PC-3 (cell line): ENCODE measurements at regions of chr11 and their contacts with region 1.

Region 1: DNA sequence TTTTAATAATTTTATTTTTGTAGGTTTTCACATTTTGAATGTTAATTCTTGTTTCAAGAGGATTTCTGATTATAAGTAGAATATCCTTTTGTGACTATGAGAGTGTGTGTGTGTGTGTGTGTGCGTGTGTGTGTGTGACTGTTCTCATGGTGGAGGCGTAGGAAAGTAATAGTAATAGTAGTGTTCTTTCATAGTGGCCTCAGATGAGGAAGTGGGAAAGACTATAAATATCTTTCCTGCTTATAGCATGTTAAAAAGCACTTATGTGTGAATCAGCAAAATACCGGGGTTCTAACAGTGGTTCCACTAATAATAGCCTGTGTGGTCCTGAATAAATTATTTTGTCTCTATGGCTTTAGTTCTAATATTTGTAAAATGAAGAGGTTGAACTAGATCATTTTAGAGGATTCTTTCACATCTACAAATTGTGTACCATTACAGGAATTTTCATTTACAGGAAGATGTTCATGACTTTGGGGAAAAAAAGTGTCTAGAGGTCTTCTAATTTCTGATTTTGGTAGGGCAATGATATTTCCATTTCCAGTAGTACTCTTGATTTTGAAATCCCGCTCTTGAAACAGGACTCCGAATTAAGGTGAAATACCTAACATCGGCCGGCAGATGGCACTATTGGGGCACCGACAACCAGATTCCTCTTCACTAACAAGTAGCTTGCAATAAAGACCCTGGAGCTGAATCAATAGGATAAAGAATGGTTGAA is 29.9 kb upstream of the OR10G7 start:
- DNase-seq: peak; percentile 74
- ATAC-seq: peak; percentile 43; the same call in 1 of the 2 replicates
- H3K4me3 ChIP-seq: no peak overlapping the region
- H3K27ac ChIP-seq: no peak overlapping the region
- H3K4me1 ChIP-seq: no peaks in the 10 kb centered on the region
- H3K27me3 ChIP-seq: peaks cover 67% of the 10 kb centered on the region
- CTCF ChIP-seq: peak; percentile 93

Region 2: GRCh38 chr11:124101737-124102136 is 30.7 kb after region 1 on chr11:
- CTCF ChIA-PET with region 1: no interaction called
- POLR2A ChIA-PET with region 1: no interaction called
- intact Hi-C with region 1: no loop called
- DNase-seq: no peak
- ATAC-seq: no peak
- H3K4me3 ChIP-seq: no peak overlapping the region
- H3K27ac ChIP-seq: no peak overlapping the region
- H3K4me1 ChIP-seq: no peaks in the 10 kb centered on the region
- H3K27me3 ChIP-seq: peaks cover 80% of the 10 kb centered on the region
- CTCF ChIP-seq: no peak

Region 3: GRCh38 chr11:124194698-124195410 is 123.8 kb after region 1 on chr11:
- CTCF ChIA-PET with region 1: interaction called, 8 read pairs
- POLR2A ChIA-PET with region 1: no interaction called
- intact Hi-C with region 1: loop called (anchors 1 kb)
- DNase-seq: peak; percentile 79
- ATAC-seq: peak; percentile 95
- H3K4me3 ChIP-seq: no peak overlapping the region
- H3K27ac ChIP-seq: no peak overlapping the region
- H3K4me1 ChIP-seq: no peaks in the 10 kb centered on the region
- H3K27me3 ChIP-seq: no peaks in the 10 kb centered on the region; the same call in 1 of the 2 replicates
- CTCF ChIP-seq: peak; percentile 95

Region 4: GRCh38 chr11:124301482-124302027 is 230.5 kb after region 1 on chr11:
- CTCF ChIA-PET with region 1: no interaction called
- POLR2A ChIA-PET with region 1: no interaction called
- intact Hi-C with region 1: no loop called
- DNase-seq: peak; percentile 49
- ATAC-seq: peak; percentile 45
- H3K4me3 ChIP-seq: no peak overlapping the region
- H3K27ac ChIP-seq: no peak overlapping the region
- H3K4me1 ChIP-seq: no peaks in the 10 kb centered on the region
- H3K27me3 ChIP-seq: peaks cover 8% of the 10 kb centered on the region; the same call in 1 of the 2 replicates
- CTCF ChIP-seq: no peak

Region 5: DNA sequence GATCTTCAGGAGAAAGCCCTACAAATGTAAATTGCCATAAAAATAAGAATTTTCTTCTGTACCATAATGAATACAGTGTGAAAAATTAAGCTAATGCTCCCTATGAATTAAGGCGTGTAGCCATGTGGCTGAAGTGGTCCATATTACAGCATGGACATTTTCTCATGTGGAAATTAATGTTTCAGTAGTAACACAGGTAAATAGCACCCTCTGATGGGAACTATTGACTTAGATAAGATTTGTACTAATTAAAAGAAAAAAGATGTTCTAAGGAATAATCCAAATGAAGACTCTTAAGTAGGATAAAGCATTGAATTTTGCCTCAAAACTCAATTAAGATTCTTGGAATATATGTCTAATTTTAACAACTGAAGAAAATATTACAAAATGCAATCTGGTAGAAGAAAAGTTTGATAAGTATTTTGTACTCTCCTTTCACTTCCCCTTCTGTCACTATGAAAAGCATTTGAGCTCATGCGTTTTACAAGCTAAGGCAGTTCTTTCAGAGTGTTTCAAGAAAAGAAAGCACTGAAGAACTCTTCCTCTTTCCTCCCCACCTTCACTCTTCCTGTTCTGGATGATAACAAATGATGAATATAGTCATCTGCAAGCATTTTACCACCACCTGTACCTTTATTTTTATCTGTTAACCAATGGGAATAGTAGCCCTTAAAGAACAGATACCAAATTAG is 258.9 kb after region 1 on chr11:
- CTCF ChIA-PET with region 1: no interaction called
- POLR2A ChIA-PET with region 1: no interaction called
- intact Hi-C with region 1: loop called (anchors 1 kb)
- DNase-seq: peak; percentile 30
- ATAC-seq: no peak; the same call in 1 of the 2 replicates
- H3K4me3 ChIP-seq: no peak overlapping the region
- H3K27ac ChIP-seq: no peak overlapping the region
- H3K4me1 ChIP-seq: no peaks in the 10 kb centered on the region
- H3K27me3 ChIP-seq: peaks cover 68% of the 10 kb centered on the region
- CTCF ChIP-seq: peak; percentile 40; the same call in 1 of the 2 replicates